ENCODE measurements at regions of chr5 and their contacts with region 1.

Region 1: GRCh38 chr5:35151146-35151920 is 79.0 kb downstream of the PRLR start:
- DNase-seq: no peak
- H3K4me3 ChIP-seq: no peak overlapping the region
- CTCF ChIP-seq: no peak
- POLR2A ChIP-seq: no peak

Region 2: GRCh38 chr5:35134278-35135030 is 16.9 kb before region 1 on chr5:
- intact Hi-C with region 1: loop called (anchors 1 kb)
- DNase-seq: no peak
- H3K4me3 ChIP-seq: no peak overlapping the region
- CTCF ChIP-seq: no peak
- POLR2A ChIP-seq: no peak

Region 3: GRCh38 chr5:35458824-35459207 is 307.5 kb after region 1 on chr5:
- intact Hi-C with region 1: no loop called
- DNase-seq: peak in 1 of 2 donors; percentile 40
- H3K4me3 ChIP-seq: no peak overlapping the region
- CTCF ChIP-seq: no peak
- POLR2A ChIP-seq: no peak

Measured in lower leg skin (tissue), 4 donors.